ENCODE measurements at regions of chr16 and their contacts with region 1.

Region 1: DNA sequence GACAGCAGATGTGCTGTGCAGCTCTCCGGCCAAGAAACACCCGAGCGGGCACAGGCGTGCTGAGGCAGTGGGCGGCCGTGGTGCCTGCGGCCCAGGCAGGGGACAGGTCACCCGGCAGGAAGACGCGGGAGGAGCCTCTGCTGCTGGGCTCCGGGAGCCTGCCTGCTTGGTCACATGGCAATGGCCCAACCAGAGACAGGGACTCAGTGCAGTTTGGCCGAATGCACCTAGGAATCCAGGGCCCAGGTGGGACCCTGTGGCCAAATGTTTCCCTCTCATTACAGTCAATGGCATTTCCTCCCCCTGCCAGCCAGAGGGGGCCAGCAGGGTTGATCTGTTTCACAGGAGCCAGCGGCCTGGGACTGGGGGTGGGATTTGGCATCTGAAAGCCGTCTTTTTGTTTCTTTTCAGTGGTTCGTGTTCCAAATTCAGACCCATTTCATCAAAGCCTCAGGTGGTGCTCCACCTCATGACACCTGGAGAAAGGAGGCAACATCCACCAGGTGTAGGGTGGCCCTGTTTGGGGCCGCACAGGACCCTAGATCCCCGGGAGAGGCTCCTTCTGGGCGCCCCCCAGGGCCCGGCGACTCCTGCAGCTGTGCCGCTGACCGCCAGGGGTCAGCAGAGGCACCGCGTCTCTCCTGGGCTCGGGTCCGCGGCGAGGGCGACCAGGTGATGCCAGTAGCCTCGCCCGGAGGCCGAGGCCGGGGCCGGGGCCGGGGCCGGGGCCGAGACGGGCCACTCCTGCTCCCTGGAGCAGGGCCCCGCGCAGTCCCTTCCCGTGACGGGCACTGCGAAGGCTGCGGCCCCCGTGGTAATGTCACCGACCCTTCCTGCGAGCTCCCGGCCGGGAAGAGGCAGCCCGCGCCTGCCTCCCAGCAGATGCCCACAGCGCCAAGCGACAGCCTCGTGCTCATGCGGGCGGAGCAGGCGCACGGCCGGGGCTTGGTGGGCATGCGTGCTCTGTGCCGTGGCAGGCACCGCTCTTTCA is 118.5 kb downstream of the C16orf78 start:
- DNase-seq: peak in 37 of 42 donors; percentile 30 to 75 (median 49)

Region 2: DNA sequence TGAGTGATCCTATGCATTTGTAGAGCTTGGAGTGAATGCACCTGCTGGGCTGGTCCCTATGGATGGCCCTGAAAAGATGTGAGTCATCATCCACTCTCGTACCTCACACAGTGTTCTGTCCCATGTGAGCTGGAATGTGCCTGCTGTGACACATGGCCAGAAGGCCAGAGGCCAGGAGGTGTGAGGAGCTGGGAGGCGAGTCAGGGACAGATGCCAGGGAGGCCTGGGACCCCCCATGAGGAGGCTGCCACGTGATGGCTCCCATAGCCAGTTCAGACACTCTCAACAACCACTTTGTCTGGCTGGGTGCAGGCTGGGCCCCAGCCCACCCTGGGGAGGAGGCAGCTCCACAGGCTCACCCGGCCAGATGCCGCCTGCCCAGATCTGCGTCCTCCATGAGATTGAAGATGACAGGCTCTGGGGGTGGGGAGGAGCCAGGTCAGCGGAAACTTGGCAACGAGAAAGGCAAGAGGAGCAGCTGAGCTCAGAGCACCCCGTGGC is 50.4 kb after region 1 on chr16:
- intact Hi-C with region 1: no loop called
- DNase-seq: no peak

Region 3: GRCh38 chr16:49575391-49575790 is 83.3 kb after region 1 on chr16:
- intact Hi-C with region 1: no loop called
- DNase-seq: peak in 35 of 42 donors; percentile 21 to 63 (median 44)

Region 4: DNA sequence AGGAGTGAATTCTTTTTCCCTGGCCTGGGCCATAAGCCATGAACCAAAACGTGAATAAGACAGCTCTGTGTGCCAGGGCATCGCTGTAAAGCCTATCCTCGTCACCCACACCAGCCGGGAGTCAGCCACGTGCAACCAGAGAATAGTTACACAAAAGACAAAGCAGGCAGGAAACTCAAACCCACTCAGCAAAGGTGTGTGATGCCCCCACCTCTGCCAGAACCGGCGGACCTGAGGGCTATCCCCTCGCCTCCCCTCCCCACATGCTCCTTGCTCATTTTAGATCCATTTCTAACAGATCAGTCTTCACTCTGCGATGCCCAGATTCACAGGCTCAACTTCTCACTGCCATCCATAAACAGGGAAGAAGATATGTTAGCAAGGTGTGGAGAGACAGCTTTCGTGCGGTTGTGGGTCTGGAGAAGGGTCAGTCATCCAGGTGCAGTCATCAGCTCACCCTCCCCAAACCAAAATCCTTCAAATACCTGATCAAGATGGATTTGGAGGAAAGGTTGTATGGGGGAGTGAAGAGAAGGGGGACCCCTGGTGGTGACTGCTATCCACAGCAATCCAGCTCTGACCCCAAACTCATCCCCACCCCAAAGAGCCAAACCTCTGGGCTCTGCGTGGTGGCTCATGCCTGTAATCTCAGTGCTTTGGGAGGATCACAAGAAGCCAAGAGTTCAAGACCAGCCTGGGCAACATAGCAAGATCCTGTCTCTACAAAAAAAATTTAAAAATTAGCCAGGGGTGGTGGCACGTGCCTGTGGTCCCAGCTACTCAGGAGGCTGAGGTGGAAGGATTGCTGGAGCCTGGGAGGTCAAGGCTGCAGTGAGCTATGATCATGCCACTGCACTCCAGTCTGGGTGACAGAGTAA is 100.7 kb after region 1 on chr16:
- intact Hi-C with region 1: loop called (anchors 5 kb)
- DNase-seq: peak in 19 of 42 donors; percentile 5 to 69 (median 34)